CD4-positive, alpha-beta memory T cell (primary cell): ENCODE measurements at regions of chr12 and their contacts with region 1.

Region 1: DNA sequence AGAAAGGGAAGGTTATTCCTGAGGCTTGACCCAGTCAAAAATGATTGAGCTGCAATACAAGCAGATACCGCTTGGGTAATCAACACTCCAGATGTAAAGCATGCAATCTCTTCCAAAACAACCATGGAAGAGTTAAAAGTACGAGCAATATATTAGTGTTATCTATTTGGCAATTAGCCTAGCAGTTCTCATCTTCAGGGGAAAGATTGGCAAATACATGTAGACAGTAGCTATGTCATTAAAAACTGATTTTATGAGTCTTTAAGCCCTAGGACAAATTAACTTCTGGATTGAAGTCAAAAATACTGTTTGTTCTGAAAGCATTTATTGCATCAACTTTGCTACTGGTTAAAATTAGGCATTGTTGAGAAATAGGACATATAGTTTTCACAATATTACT is 9.3 kb upstream of the GYS2 start:
- DNase-seq: no peak
- H3K4me3 ChIP-seq: peak overlapping the region in 1 of 2 donors; percentile 18
- H3K4me3 Mint-ChIP-seq: peak overlapping the region in 6 of 8 donors; percentile 0 to 79 (median 42)
- H3K27ac ChIP-seq: peak overlapping the region; percentile 1
- H3K27ac Mint-ChIP-seq: peak overlapping the region in 6 of 7 donors; percentile 65 to 89 (median 86)
- H3K4me1 ChIP-seq: peaks cover 58% of the 10 kb centered on the region
- H3K4me1 Mint-ChIP-seq: peaks cover 41 to 64% (median 53%) of the 10 kb centered on the region in 4 donors
- H3K27me3 ChIP-seq: no peaks in the 10 kb centered on the region
- H3K27me3 Mint-ChIP-seq: no peaks in the 10 kb centered on the region

Region 2: GRCh38 chr12:21631367-21631766 is 17.4 kb after region 1 on chr12:
- CTCF ChIA-PET with region 1: interaction called, 6 read pairs
- POLR2A ChIA-PET with region 1: interaction called, 7 read pairs
- intact Hi-C with region 1: loop called (anchors 2 kb)
- DNase-seq: no peak
- H3K4me3 ChIP-seq: no peak overlapping the region
- H3K4me3 Mint-ChIP-seq: no peak overlapping the region
- H3K27ac ChIP-seq: no peak overlapping the region
- H3K27ac Mint-ChIP-seq: peak overlapping the region in 6 of 7 donors; percentile 3 to 83 (median 57)
- H3K4me1 ChIP-seq: no peaks in the 10 kb centered on the region
- H3K4me1 Mint-ChIP-seq: peaks cover 5 to 16% (median 11%) of the 10 kb centered on the region in 4 donors
- H3K27me3 ChIP-seq: no peaks in the 10 kb centered on the region
- H3K27me3 Mint-ChIP-seq: no peaks in the 10 kb centered on the region